Activated CD4-positive, alpha-beta T cell treated with anti-CD3 and anti-CD28 coated beads, Interleukin-2, amount 10 ng/mL, durations not matched to agents 24 days and 14 days (primary cell): ENCODE measurements at regions of chr3 and their contacts with region 1.

Region 1: DNA sequence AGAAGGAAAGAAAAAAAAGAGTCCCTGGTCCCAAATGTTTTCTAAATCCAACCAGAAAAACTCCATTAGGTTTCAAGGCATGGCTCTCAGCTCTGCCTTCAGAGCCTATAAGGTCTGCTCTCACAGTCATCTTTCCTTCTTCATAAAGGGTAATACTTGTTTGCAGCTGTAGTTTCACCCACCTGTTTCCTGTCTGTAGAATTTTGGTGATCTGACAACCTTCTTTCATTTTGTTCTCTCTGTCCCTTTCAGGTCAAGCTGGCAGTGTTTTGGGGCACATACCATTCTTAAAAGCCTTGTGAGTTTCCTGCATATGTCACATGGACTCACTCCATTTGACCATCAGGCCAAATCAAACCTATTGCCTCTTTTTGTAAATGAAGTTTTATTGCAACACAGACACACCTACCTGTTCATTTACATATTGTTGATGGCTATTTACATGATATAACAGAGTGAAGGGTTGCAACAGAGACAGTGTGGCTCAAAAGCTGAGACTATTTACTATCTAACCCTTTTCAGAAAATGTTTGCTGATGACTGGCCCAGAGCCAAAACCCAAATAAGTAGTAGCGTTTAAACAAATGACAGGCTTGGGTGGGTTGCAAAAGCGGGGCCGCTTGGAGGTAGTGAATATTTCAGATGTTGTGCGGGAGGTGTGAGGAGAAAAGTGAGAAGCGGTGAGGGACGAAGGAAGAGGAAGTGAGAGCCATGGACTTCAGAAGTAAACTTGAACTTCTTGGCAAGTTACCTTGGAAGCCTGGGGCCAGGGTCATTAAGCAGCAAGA is 292.7 kb upstream of the PROK2 start:
- DNase-seq: no peak
- H3K4me3 Mint-ChIP-seq: no peak overlapping the region
- H3K27ac Mint-ChIP-seq: peak overlapping the region; percentile 8
- H3K4me1 Mint-ChIP-seq: peaks cover 26% of the 10 kb centered on the region
- H3K27me3 Mint-ChIP-seq: no peaks in the 10 kb centered on the region

Region 2: GRCh38 chr3:72031581-72031980 is 46.1 kb before region 1 on chr3:
- intact Hi-C with region 1: no loop called
- DNase-seq: no peak
- H3K4me3 Mint-ChIP-seq: no peak overlapping the region
- H3K27ac Mint-ChIP-seq: no peak overlapping the region
- H3K4me1 Mint-ChIP-seq: peaks cover 29% of the 10 kb centered on the region
- H3K27me3 Mint-ChIP-seq: no peaks in the 10 kb centered on the region

Region 3: DNA sequence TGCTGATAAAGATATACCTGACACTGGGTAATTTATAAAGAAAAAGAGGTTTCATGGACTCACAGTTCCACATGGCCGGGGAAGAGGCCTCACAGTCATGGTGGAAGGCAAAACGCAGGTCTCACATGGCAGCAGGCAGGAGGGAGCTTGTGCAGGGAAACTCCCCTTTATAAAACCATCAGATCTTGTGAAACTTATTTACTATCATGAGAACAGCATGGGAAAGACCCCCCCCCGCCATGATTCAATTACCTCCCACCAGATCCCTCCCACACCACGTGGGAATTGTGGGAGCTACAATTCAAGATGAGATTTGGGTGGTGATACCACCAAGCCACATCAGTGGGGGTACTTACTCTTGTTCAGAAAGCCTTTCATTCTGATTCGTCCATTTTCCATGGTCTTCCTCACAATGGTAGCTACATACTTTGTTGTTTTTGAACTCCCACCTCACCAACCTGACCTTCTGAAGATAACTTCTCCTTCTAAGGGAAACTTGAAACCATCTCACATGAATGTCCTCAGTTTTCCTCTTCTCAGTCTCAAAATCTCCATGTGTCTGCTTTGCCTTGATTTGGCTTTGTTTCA is 17.1 kb before region 1 on chr3:
- intact Hi-C with region 1: loop called (anchors 1 kb)
- DNase-seq: no peak
- H3K4me3 Mint-ChIP-seq: no peak overlapping the region
- H3K27ac Mint-ChIP-seq: peak overlapping the region; percentile 59
- H3K4me1 Mint-ChIP-seq: peaks cover 5% of the 10 kb centered on the region
- H3K27me3 Mint-ChIP-seq: no peaks in the 10 kb centered on the region